Breast epithelium (tissue), 4 donors: ENCODE measurements at regions of chr1 and their contacts with region 1.

Region 1: GRCh38 chr1:202901555-202901954 is 12.6 kb upstream of the RABIF start:
- DNase-seq: no peak
- H3K4me3 ChIP-seq: no peak overlapping the region
- H3K27ac ChIP-seq: no peak overlapping the region
- H3K4me1 ChIP-seq: no peaks in the 10 kb centered on the region
- H3K27me3 ChIP-seq: no peaks in the 10 kb centered on the region
- CTCF ChIP-seq: no peak
- POLR2A ChIP-seq: no peak

Region 2: DNA sequence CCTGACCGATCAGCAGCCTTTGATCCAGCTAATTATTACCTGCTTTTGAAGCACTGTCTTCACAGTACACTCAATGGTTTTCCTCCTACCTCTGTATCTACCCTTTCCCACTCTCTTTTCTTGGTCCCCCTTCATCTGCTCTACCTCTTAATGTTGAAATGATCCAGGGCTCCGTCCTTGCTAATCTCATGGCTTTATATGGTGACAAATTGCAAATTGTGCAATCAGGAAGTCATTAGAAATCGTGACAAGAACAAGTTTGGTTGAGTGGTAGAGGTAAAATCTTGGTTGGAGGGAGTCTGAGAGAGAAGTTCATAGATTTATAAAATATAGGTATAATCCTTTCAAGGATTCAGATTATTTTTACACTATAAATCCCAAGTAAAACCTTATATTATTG is 75.1 kb after region 1 on chr1:
- intact Hi-C with region 1: loop called (anchors 2 kb)
- DNase-seq: no peak
- H3K4me3 ChIP-seq: no peak overlapping the region
- H3K27ac ChIP-seq: no peak overlapping the region
- H3K4me1 ChIP-seq: no peaks in the 10 kb centered on the region
- H3K27me3 ChIP-seq: no peaks in the 10 kb centered on the region
- CTCF ChIP-seq: no peak
- POLR2A ChIP-seq: no peak